Activated T-helper 2 cell treated with anti-CD3 and anti-CD28 coated beads, Interferon-gamma antibody, Interleukin-2, Interleukin-4, amounts not matched to agents 10 μg/mL and 5 μg/mL and 100 μg/mL, durations not matched to agents 14 hours and 24 hours and 36 hours (primary cell): ENCODE measurements at regions of chr2 and their contacts with region 1.

Region 1: DNA sequence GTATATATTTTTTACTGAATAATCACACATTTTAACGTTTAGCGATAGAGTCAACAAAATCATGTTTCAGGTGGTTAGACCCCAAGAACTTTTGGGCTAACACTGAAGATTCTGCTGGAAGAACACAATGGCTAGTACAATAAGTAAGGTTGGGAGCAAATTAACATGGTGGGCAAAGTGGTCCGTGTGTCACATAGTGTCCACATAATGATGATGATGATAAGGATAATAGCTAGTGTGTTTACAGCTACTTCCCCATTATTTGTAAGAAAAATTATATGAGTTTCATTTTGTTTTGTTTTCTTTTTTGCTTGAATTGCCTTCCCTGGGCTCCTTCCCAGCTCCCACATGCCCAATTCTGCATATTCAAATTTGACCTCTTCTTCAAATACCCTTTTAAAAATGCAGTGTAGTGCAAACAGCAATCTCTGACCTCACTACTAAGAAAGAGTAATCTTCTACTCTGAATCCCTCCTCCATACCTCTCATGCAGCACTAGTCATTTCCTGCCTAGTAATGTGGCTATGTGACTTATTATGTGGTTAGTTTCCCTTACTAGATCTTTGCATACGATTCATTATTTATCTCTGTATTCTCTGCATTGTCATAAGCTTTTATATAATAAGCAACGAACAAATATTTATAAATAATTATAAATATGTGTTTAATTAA is 16.9 kb upstream of the VPS54 start:
- DNase-seq: peak; percentile 30
- H3K4me3 Mint-ChIP-seq: peak overlapping the region; percentile 19
- H3K27ac Mint-ChIP-seq: peak overlapping the region; percentile 87
- H3K4me1 Mint-ChIP-seq: peaks cover 48% of the 10 kb centered on the region
- H3K27me3 Mint-ChIP-seq: no peaks in the 10 kb centered on the region

Region 2: DNA sequence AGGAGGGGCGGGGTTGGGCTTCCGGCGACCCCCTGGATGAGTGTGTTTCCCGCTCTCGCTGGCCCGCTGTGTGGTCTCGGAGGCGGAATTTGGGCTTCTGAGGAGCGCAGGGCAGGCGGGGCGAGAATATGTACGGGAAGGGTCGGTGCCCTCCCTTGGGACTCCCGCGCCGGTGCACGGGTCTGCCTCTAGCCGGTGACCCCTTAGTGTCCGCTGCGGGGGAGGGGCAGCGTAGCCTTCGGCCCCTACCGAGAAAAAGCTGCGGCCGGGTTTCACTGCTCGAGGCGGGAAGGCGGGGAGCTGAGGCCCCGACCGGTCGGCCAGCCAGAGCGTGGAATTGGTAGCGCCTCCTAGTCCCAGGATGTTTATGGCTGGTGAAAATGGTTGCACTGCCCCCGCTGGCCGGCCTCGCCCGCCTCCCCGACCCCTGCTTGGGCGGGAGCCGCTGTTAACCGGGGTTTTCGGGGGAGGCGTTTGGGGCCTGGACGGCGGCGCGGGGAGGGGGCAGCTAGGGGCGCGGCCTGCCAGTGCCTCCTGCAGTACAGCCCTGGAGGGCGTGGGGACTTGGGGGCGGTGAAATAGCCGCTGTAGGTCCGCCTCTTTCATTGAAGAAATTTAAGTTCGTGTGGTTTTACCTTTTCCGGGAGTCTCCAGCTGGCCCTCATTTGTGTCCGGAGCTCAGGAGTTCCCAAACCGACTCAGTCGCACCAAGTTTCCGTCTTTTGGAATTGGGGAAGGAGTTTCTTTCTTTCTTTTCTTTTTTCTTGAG is 194.7 kb before region 1 on chr2 and contains the start of gene UGP2:
- intact Hi-C with region 1: loop called (anchors 1 kb)
- DNase-seq: peak; percentile 88
- H3K4me3 Mint-ChIP-seq: peak within 1 kb of the TSS; percentile 92
- H3K27ac Mint-ChIP-seq: peak within 1 kb of the TSS; percentile 95
- H3K4me1 Mint-ChIP-seq: peaks cover 48% of the 10 kb centered on the region
- H3K27me3 Mint-ChIP-seq: peaks cover 2% of the 10 kb centered on the region
- total RNA-seq, gene UGP2: 90.8 and 91.2 TPM in 2 replicates

Region 3: GRCh38 chr2:64019719-64020528 is 16.2 kb before region 1 on chr2:
- intact Hi-C with region 1: loop called (anchors 1 kb)
- DNase-seq: no peak
- H3K4me3 Mint-ChIP-seq: peak overlapping the region; percentile 81
- H3K27ac Mint-ChIP-seq: peak overlapping the region; percentile 94
- H3K4me1 Mint-ChIP-seq: peaks cover 40% of the 10 kb centered on the region
- H3K27me3 Mint-ChIP-seq: no peaks in the 10 kb centered on the region

Region 4: DNA sequence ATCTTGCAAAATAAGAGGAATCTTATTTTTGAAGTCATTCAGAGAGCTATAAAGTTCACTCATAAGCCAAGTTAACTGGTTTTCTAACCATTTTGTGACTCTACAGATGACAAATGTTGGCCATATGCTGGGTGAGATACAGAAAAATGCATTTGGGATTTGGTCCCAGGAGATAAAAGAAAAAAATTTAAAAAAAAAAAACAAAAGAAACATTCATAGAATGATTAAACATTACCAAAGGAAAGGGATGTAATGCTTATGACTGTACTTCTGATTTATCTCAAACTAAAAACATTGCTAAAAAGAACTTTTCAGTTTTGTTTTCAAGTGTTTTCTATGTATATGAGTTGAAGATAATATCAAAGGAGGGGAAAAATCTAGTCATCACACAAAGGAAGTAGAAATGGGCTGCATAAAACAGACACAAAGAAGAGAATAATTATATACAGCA is 65.0 kb after region 1 on chr2:
- intact Hi-C with region 1: loop called (anchors 1 kb)
- DNase-seq: no peak
- H3K4me3 Mint-ChIP-seq: peak overlapping the region; percentile 27
- H3K27ac Mint-ChIP-seq: peak overlapping the region; percentile 89
- H3K4me1 Mint-ChIP-seq: peaks cover 44% of the 10 kb centered on the region
- H3K27me3 Mint-ChIP-seq: no peaks in the 10 kb centered on the region

Region 5: GRCh38 chr2:64120928-64121327 is 84.8 kb after region 1 on chr2:
- intact Hi-C with region 1: no loop called
- DNase-seq: no peak
- H3K4me3 Mint-ChIP-seq: no peak overlapping the region
- H3K27ac Mint-ChIP-seq: no peak overlapping the region
- H3K4me1 Mint-ChIP-seq: peaks cover 19% of the 10 kb centered on the region
- H3K27me3 Mint-ChIP-seq: peaks cover 2% of the 10 kb centered on the region

Region 6: DNA sequence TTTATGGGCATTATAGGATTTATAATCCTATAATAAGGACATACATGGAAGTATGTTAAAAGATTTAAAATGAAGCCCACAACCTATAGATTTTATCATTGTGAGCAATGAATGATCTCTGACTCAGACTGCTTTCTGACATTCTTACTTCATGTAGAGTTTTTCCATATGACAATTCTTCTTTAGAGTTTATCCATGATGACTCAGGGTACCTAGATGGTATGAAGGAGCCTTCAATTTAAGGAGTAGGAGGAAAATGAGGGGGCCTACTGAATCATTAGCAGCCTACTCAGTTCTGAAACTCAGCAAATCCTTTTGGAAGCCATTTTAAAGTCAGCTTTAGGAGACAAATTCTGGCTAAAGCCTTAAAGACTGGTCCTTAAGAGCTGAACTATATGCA is 97.7 kb after region 1 on chr2:
- intact Hi-C with region 1: loop called (anchors 1 kb)
- DNase-seq: no peak
- H3K4me3 Mint-ChIP-seq: peak overlapping the region; percentile 26
- H3K27ac Mint-ChIP-seq: peak overlapping the region; percentile 68
- H3K4me1 Mint-ChIP-seq: peaks cover 69% of the 10 kb centered on the region
- H3K27me3 Mint-ChIP-seq: no peaks in the 10 kb centered on the region

Region 7: GRCh38 chr2:64730551-64731262 is 694.5 kb after region 1 on chr2:
- intact Hi-C with region 1: loop called (anchors 5 kb)
- DNase-seq: peak; percentile 31
- H3K4me3 Mint-ChIP-seq: peak overlapping the region; percentile 76
- H3K27ac Mint-ChIP-seq: peak overlapping the region; percentile 94
- H3K4me1 Mint-ChIP-seq: peaks cover 75% of the 10 kb centered on the region
- H3K27me3 Mint-ChIP-seq: no peaks in the 10 kb centered on the region